ENCODE measurements at regions of chr6 and their contacts with region 1.

Region 1: GRCh38 chr6:85404502-85405174 is 45.2 kb upstream of the NT5E start:
- DNase-seq: peak in 1 of 3 donors; percentile 46
- ATAC-seq: peak in 3 of 4 donors; percentile 31 to 59 (median 33)
- H3K4me3 ChIP-seq: no peak overlapping the region
- H3K27ac ChIP-seq: peak overlapping the region in 2 of 3 donors; percentile 16 to 80
- H3K4me1 ChIP-seq: peaks cover 0 to 23% (median 5%) of the 10 kb centered on the region in 4 donors
- H3K27me3 ChIP-seq: no peaks in the 10 kb centered on the region
- CTCF ChIP-seq: no peak
- POLR2A ChIP-seq: no peak

Region 2: GRCh38 chr6:85460921-85461797 is 56.5 kb after region 1 on chr6:
- intact Hi-C with region 1: loop called in 1 of 2 experiments (anchors 10 kb)
- DNase-seq: no peak
- ATAC-seq: peak; percentile 53 to 67 (median 67)
- H3K4me3 ChIP-seq: no peak overlapping the region
- H3K27ac ChIP-seq: peak overlapping the region; percentile 10 to 82 (median 73)
- H3K4me1 ChIP-seq: peaks cover 0 to 52% (median 12%) of the 10 kb centered on the region in 4 donors
- H3K27me3 ChIP-seq: no peaks in the 10 kb centered on the region
- CTCF ChIP-seq: no peak
- POLR2A ChIP-seq: no peak

Region 3: GRCh38 chr6:85516168-85516567 is 111.5 kb after region 1 on chr6:
- intact Hi-C with region 1: no loop called
- DNase-seq: no peak
- ATAC-seq: peak in 2 of 4 donors; percentile 45 to 59
- H3K4me3 ChIP-seq: no peak overlapping the region
- H3K27ac ChIP-seq: no peak overlapping the region
- H3K4me1 ChIP-seq: no peaks in the 10 kb centered on the region
- H3K27me3 ChIP-seq: no peaks in the 10 kb centered on the region
- CTCF ChIP-seq: no peak
- POLR2A ChIP-seq: no peak

Measured in right lobe of liver (tissue), 6 donors.